ENCODE measurements at regions of chr1 and their contacts with region 1.

Region 1: DNA sequence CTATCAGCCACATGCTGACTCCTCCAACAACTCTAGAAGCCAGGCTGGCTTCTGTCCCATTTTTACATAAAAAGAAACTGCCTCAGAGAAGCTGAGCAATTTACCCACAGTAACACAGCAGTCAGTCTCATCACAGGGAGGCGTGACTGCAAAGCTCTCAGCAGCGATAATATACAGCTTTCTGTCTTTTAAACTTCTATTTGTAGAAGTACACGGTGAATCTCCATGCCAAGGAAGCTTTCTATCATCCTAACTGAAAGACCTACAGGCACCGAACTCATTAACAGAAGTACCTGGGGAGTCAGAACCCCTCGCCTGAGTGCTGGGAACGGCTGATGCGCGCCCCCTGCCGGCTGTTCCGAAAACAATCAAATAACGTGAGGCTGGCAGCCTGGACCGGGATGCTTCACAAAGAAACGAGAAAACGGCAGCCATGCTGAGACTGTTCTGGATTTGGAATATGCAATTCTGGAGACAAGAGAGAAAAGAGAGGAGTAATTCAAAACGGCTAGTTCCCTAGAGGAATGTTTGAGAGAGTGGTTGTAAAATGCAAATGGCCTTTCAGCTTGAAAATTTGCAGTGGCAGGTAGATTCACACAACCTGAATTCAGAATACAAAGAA is 43.5 kb upstream of the RAB4A start:
- DNase-seq: no peak
- H3K4me3 ChIP-seq: no peak overlapping the region
- H3K27me3 ChIP-seq: peaks cover 5% of the 10 kb centered on the region
- CTCF ChIP-seq: peak; percentile 80

Region 2: GRCh38 chr1:228664399-228664914 is 563.0 kb before region 1 on chr1:
- CTCF ChIA-PET with region 1: interaction called, 63 read pairs
- POLR2A ChIA-PET with region 1: no interaction called
- DNase-seq: no peak
- H3K4me3 ChIP-seq: no peak overlapping the region
- H3K27me3 ChIP-seq: no peaks in the 10 kb centered on the region
- CTCF ChIP-seq: peak; percentile 74

Region 3: GRCh38 chr1:228734881-228735801 is 492.3 kb before region 1 on chr1 and contains the start of gene RHOU:
- CTCF ChIA-PET with region 1: interaction called, 48 read pairs
- POLR2A ChIA-PET with region 1: no interaction called
- DNase-seq: no peak
- H3K4me3 ChIP-seq: peak within 1 kb of the TSS; percentile 60
- H3K27me3 ChIP-seq: no peaks in the 10 kb centered on the region; the same call in 1 of the 2 replicates
- CTCF ChIP-seq: peak; percentile 34; the same call in 1 of the 2 replicates
- polyA plus RNA-seq, gene RHOU: 0.42 and 0.63 TPM in 2 replicates

Region 4: GRCh38 chr1:228871314-228872061 is 355.9 kb before region 1 on chr1:
- CTCF ChIA-PET with region 1: no interaction called
- POLR2A ChIA-PET with region 1: no interaction called
- DNase-seq: no peak
- H3K4me3 ChIP-seq: no peak overlapping the region
- H3K27me3 ChIP-seq: no peaks in the 10 kb centered on the region
- CTCF ChIP-seq: no peak

Region 5: GRCh38 chr1:229204921-229205777 is 22.3 kb before region 1 on chr1:
- CTCF ChIA-PET with region 1: interaction called, 17 read pairs
- POLR2A ChIA-PET with region 1: no interaction called
- DNase-seq: peak; percentile 66
- H3K4me3 ChIP-seq: no peak overlapping the region
- H3K27me3 ChIP-seq: peaks cover 3% of the 10 kb centered on the region; the same call in 1 of the 2 replicates
- CTCF ChIP-seq: no peak

Region 6: GRCh38 chr1:229238674-229239415 is 11.4 kb after region 1 on chr1:
- CTCF ChIA-PET with region 1: interaction called, 11 read pairs
- POLR2A ChIA-PET with region 1: no interaction called
- DNase-seq: no peak
- H3K4me3 ChIP-seq: no peak overlapping the region
- H3K27me3 ChIP-seq: no peaks in the 10 kb centered on the region
- CTCF ChIP-seq: no peak